ENCODE measurements at regions of chr21 and their contacts with region 1.

Region 1: GRCh38 chr21:39388038-39388810 is 39.3 kb upstream of the HMGN1 start:
- DNase-seq: peak; percentile 80 to 95 (median 86)
- ATAC-seq: peak; percentile 78
- H3K4me3 ChIP-seq: peak overlapping the region; percentile 63
- H3K4me3 Mint-ChIP-seq: peak overlapping the region; percentile 90
- H3K27ac ChIP-seq: peak overlapping the region in 1 of 2 donors; percentile 35
- H3K27ac Mint-ChIP-seq: peak overlapping the region; percentile 85
- H3K4me1 ChIP-seq: peaks cover 30% of the 10 kb centered on the region
- H3K4me1 Mint-ChIP-seq: peaks cover 36% of the 10 kb centered on the region
- H3K27me3 ChIP-seq: no peaks in the 10 kb centered on the region
- H3K27me3 Mint-ChIP-seq: no peaks in the 10 kb centered on the region
- CTCF ChIP-seq: peak; percentile 96

Region 2: GRCh38 chr21:38505654-38506515 is 882.3 kb before region 1 on chr21:
- CTCF ChIA-PET with region 1: no interaction called
- POLR2A ChIA-PET with region 1: no interaction called
- intact Hi-C with region 1: loop called in 1 of 2 experiments (anchors 5 kb)
- DNase-seq: peak in 2 of 14 experiments; percentile 49 to 53
- ATAC-seq: no peak
- H3K4me3 ChIP-seq: no peak overlapping the region
- H3K4me3 Mint-ChIP-seq: peak overlapping the region; percentile 30
- H3K27ac ChIP-seq: no peak overlapping the region
- H3K27ac Mint-ChIP-seq: no peak overlapping the region
- H3K4me1 ChIP-seq: peaks cover 6% of the 10 kb centered on the region
- H3K4me1 Mint-ChIP-seq: peaks cover 15% of the 10 kb centered on the region
- H3K27me3 ChIP-seq: peaks cover 8 to 13% of the 10 kb centered on the region in 2 experiments
- H3K27me3 Mint-ChIP-seq: peaks cover 46% of the 10 kb centered on the region
- CTCF ChIP-seq: peak; percentile 37

Region 3: GRCh38 chr21:38805328-38806152 is 582.7 kb before region 1 on chr21 and contains the start of gene ETS2:
- CTCF ChIA-PET with region 1: no interaction called
- POLR2A ChIA-PET with region 1: no interaction called
- intact Hi-C with region 1: loop called in 1 of 2 experiments (anchors 10 kb)
- DNase-seq: peak; percentile 37 to 86 (median 64)
- ATAC-seq: peak; percentile 80
- H3K4me3 ChIP-seq: peak within 1 kb of the TSS; percentile 62
- H3K4me3 Mint-ChIP-seq: peak within 1 kb of the TSS; percentile 90
- H3K27ac ChIP-seq: peak within 1 kb of the TSS; percentile 25 to 37
- H3K27ac Mint-ChIP-seq: peak within 1 kb of the TSS; percentile 64
- H3K4me1 ChIP-seq: peaks cover 17% of the 10 kb centered on the region
- H3K4me1 Mint-ChIP-seq: peaks cover 39% of the 10 kb centered on the region
- H3K27me3 ChIP-seq: no peaks in the 10 kb centered on the region
- H3K27me3 Mint-ChIP-seq: no peaks in the 10 kb centered on the region
- CTCF ChIP-seq: peak; percentile 5
- total RNA-seq, gene ETS2: 11.4 to 13.9 TPM

Region 4: GRCh38 chr21:39232861-39233291 is 155.3 kb before region 1 on chr21:
- CTCF ChIA-PET with region 1: no interaction called
- POLR2A ChIA-PET with region 1: no interaction called
- intact Hi-C with region 1: no loop called
- DNase-seq: no peak
- ATAC-seq: no peak
- H3K4me3 ChIP-seq: no peak overlapping the region
- H3K4me3 Mint-ChIP-seq: no peak overlapping the region
- H3K27ac ChIP-seq: no peak overlapping the region
- H3K27ac Mint-ChIP-seq: peak overlapping the region; percentile 59
- H3K4me1 ChIP-seq: no peaks in the 10 kb centered on the region
- H3K4me1 Mint-ChIP-seq: peaks cover 10% of the 10 kb centered on the region
- H3K27me3 ChIP-seq: no peaks in the 10 kb centered on the region
- H3K27me3 Mint-ChIP-seq: no peaks in the 10 kb centered on the region
- CTCF ChIP-seq: no peak

Region 5: DNA sequence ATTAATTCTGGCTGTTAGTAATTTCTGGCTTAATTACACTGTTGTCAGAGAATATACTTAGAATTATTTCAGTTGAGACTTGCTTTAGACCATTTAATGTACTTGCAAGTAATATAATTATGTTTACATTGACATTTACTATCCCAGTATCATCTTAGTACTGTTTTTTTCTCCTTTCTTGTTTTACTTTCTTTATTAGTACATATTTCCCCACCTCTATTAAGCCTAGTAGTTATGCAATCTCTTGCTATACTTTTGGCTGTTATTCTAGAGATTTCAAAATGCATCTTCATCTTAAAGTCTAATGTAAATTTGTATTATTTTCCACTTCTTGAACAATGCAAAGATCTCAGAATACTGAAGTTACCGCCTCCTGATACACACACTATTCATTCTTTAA is 99.2 kb before region 1 on chr21:
- CTCF ChIA-PET with region 1: no interaction called
- POLR2A ChIA-PET with region 1: no interaction called
- intact Hi-C with region 1: no loop called
- DNase-seq: no peak
- ATAC-seq: no peak
- H3K4me3 ChIP-seq: no peak overlapping the region
- H3K4me3 Mint-ChIP-seq: no peak overlapping the region
- H3K27ac ChIP-seq: no peak overlapping the region
- H3K27ac Mint-ChIP-seq: no peak overlapping the region
- H3K4me1 ChIP-seq: no peaks in the 10 kb centered on the region
- H3K4me1 Mint-ChIP-seq: no peaks in the 10 kb centered on the region
- H3K27me3 ChIP-seq: no peaks in the 10 kb centered on the region
- H3K27me3 Mint-ChIP-seq: no peaks in the 10 kb centered on the region
- CTCF ChIP-seq: no peak

Region 6: GRCh38 chr21:39313571-39314142 is 74.6 kb before region 1 on chr21 and contains the start of gene BRWD1:
- CTCF ChIA-PET with region 1: interaction called, 4 read pairs
- POLR2A ChIA-PET with region 1: interaction called, 33 read pairs
- intact Hi-C with region 1: loop called (anchors 1 to 2 kb)
- DNase-seq: peak; percentile 68 to 92 (median 75)
- ATAC-seq: peak; percentile 27
- H3K4me3 ChIP-seq: peak within 1 kb of the TSS; percentile 79
- H3K4me3 Mint-ChIP-seq: peak within 1 kb of the TSS; percentile 95
- H3K27ac ChIP-seq: peak within 1 kb of the TSS; percentile 55 to 85
- H3K27ac Mint-ChIP-seq: peak within 1 kb of the TSS; percentile 93
- H3K4me1 ChIP-seq: peaks cover 31% of the 10 kb centered on the region
- H3K4me1 Mint-ChIP-seq: peaks cover 50% of the 10 kb centered on the region
- H3K27me3 ChIP-seq: no peaks in the 10 kb centered on the region
- H3K27me3 Mint-ChIP-seq: no peaks in the 10 kb centered on the region
- CTCF ChIP-seq: no peak
- total RNA-seq, gene BRWD1: 84.7 to 92.2 TPM

Region 7: GRCh38 chr21:39373644-39374043 is 14.6 kb before region 1 on chr21:
- CTCF ChIA-PET with region 1: interaction called, 11 read pairs
- POLR2A ChIA-PET with region 1: no interaction called
- intact Hi-C with region 1: loop called in 1 of 2 experiments (anchors 2 kb)
- DNase-seq: peak in 3 of 14 experiments; percentile 15 to 56 (median 54)
- ATAC-seq: peak; percentile 83
- H3K4me3 ChIP-seq: no peak overlapping the region
- H3K4me3 Mint-ChIP-seq: no peak overlapping the region
- H3K27ac ChIP-seq: no peak overlapping the region
- H3K27ac Mint-ChIP-seq: no peak overlapping the region
- H3K4me1 ChIP-seq: no peaks in the 10 kb centered on the region
- H3K4me1 Mint-ChIP-seq: no peaks in the 10 kb centered on the region
- H3K27me3 ChIP-seq: peaks cover 0 to 2% of the 10 kb centered on the region in 2 experiments
- H3K27me3 Mint-ChIP-seq: no peaks in the 10 kb centered on the region
- CTCF ChIP-seq: no peak